ENCODE measurements at regions of chr6 and their contacts with region 1.

Region 1: DNA sequence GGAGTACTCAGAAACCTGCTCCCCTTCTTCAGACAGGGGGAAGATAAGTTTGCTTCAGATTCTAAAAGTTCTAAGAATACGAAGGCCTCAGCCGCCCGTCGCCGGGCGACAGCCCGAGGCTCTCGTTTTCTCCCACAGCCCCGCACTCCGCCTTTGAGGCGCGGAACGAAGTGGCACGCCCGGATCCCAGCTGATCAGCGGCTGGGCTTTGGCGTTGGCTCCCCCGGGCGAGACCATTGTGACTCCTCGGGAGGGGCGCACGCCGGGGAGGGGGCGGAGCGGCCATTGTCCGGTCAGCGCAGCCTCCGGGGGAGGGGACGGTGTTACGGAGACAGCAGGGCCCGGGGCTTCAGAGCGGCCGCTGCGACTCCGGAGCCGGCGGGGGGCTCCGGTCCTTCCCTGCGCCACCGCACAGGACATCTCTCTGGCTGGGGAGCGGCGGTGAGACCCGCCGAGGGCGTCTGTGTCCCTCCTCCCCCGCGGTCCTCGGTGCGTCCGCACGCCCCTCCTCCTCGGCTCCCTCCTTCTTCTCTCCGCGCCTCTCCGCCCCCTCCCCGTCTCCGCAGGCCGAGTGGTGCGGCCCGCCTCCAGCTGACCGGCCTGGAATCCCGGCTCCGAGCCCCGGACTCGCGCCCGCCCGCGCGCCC is at the start of gene ZFAND3:
- DNase-seq: peak; percentile 98
- H3K4me3 Mint-ChIP-seq: peak within 1 kb of the TSS; percentile 99
- H3K27ac Mint-ChIP-seq: peak within 1 kb of the TSS; percentile 97
- H3K4me1 Mint-ChIP-seq: peaks cover 31% of the 10 kb centered on the region
- H3K27me3 Mint-ChIP-seq: peaks cover 5% of the 10 kb centered on the region
- total RNA-seq, gene ZFAND3: 31.5 and 39.6 TPM in 2 replicates

Region 2: GRCh38 chr6:38702558-38703397 is 883.5 kb after region 1 on chr6 and contains the start of gene GLO1:
- intact Hi-C with region 1: loop called (anchors 1 kb)
- DNase-seq: peak; percentile 99
- H3K4me3 Mint-ChIP-seq: peak within 1 kb of the TSS; percentile 96
- H3K27ac Mint-ChIP-seq: peak within 1 kb of the TSS; percentile 93
- H3K4me1 Mint-ChIP-seq: peaks cover 40% of the 10 kb centered on the region
- H3K27me3 Mint-ChIP-seq: peaks cover 7% of the 10 kb centered on the region
- total RNA-seq, gene GLO1: 124 and 127 TPM in 2 replicates